Mammary epithelial cell (primary cell): ENCODE measurements at regions of chr9 and their contacts with region 1.

Region 1: GRCh38 chr9:83219152-83219923 is 156.4 kb upstream of the RASEF start:
- DNase-seq: peak; percentile 72
- H3K4me3 ChIP-seq: peak overlapping the region; percentile 45 to 86 (median 62)
- H3K27ac ChIP-seq: peak overlapping the region; percentile 60
- H3K4me1 ChIP-seq: peaks cover 23% of the 10 kb centered on the region
- H3K27me3 ChIP-seq: no peaks in the 10 kb centered on the region
- CTCF ChIP-seq: peak; percentile 32 to 71

Region 2: DNA sequence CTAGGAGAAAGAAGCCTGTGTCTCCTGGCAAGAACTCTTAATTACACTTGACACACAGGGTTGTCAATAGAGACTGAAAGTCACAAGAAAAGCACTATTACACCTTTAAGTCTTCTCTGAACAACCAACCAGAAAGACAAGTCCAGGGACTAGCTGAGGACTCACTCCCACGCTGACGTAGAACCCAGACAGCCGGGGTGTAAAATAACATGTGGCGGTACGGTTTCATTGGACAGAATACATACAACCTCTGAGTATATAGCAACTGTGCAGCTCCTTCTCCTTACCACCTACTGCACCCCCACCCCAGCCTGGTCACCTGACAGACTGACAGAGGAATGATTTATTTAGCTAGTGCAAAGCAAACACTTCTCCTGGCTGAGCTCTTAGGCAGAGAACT is 53.0 kb before region 1 on chr9:
- CTCF ChIA-PET with region 1: no interaction called
- dilution Hi-C with region 1: no loop called
- in situ Hi-C with region 1: no loop called
- intact Hi-C with region 1: loop called (anchors 1 kb)
- DNase-seq: peak; percentile 35
- H3K4me3 ChIP-seq: no peak overlapping the region
- H3K27ac ChIP-seq: no peak overlapping the region
- H3K4me1 ChIP-seq: peaks cover 14% of the 10 kb centered on the region
- H3K27me3 ChIP-seq: no peaks in the 10 kb centered on the region
- CTCF ChIP-seq: no peak

Region 3: DNA sequence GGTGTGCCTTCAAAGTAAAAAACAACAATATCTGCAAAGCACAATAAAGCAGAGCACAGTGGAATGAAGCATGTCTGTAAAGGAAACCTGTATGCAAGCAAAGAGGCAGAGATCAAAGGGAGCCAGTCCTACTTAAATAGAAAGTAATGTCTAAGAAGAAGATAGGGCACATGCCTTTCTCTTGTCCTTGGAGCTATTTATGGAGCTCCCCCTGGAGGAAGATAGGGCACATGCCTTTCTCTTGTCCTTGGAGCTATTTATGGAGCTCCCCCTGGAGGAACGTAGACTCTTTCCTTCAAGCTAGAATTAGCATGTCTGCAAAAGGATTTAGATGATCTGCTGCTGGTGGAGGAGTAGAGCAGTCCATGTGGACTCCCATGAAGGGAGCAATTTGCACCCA is 11.7 kb after region 1 on chr9:
- CTCF ChIA-PET with region 1: interaction called, 32 read pairs
- dilution Hi-C with region 1: no loop called
- in situ Hi-C with region 1: no loop called
- intact Hi-C with region 1: no loop called
- DNase-seq: no peak
- H3K4me3 ChIP-seq: no peak overlapping the region
- H3K27ac ChIP-seq: no peak overlapping the region
- H3K4me1 ChIP-seq: no peaks in the 10 kb centered on the region
- H3K27me3 ChIP-seq: no peaks in the 10 kb centered on the region
- CTCF ChIP-seq: peak; percentile 61

Region 4: DNA sequence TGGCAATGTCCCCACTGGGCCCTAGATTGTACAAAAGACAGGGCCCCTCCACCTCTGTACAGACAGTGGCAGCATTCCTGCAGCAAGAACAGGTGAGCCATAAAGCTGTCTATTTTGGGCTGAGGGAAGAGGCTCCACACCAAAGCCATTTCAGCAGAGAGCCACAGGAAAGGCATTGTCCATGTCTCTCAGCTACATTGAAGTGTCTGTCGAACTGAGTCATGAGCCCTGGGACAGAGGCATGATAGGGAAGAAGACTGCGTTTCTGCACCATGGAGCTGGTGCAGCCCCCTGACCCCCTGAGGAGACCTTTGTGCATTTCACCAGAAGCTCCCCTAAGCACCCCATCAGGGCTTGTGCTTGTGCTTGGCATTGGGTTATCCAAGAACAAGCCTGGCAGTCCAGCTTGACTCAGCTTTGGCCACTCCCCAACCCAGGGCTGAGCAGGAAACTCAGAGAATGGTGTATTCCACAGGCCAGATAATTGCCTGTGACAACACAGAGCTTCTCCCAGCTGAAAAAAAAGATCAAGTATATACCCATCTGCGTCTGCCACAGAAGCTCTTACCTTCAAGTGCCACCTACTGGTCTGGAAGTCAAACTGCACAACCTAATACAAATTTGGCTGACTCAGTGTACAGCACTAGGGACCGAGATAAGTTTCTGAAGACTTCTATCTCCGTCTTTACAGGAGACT is 324.8 kb after region 1 on chr9:
- CTCF ChIA-PET with region 1: interaction called, 10 read pairs
- dilution Hi-C with region 1: no loop called
- in situ Hi-C with region 1: loop called in 1 of 2 experiments (anchors 25 kb)
- intact Hi-C with region 1: loop called (anchors 1 kb)
- DNase-seq: peak; percentile 68
- H3K4me3 ChIP-seq: no peak overlapping the region
- H3K27ac ChIP-seq: no peak overlapping the region
- H3K4me1 ChIP-seq: no peaks in the 10 kb centered on the region
- H3K27me3 ChIP-seq: no peaks in the 10 kb centered on the region
- CTCF ChIP-seq: peak; percentile 72 to 83

Region 5: DNA sequence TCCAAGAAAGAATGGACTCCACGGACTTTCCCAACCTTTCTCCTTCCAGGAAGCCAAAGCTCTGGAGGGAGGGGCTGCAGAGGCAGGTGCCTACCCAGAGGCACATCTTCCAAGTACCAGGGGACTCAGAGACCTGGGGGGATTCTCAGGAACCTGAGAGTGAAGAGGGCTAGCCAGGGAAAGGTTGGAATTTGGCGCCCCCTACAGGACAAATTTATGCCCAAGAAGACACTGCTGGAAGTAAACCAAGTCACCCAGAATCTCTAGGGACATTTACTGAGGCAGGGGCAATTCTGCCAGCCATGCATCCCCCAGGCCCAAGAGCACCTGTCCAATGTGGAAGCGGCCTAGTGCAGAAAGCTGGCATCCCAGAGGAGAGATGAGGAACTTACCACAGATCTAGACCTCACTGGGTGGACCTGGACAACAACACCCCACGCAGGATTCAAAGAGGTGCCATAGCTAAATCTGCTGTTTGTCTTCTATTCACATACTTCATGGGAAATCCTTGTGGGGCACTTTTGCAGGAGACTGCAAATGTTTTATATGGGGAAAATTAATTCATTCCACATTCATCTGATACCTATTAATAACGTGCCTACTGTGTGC is 377.7 kb after region 1 on chr9:
- CTCF ChIA-PET with region 1: interaction called, 4 read pairs
- dilution Hi-C with region 1: no loop called
- in situ Hi-C with region 1: no loop called
- intact Hi-C with region 1: loop called (anchors 1 kb)
- DNase-seq: peak; percentile 15
- H3K4me3 ChIP-seq: no peak overlapping the region
- H3K27ac ChIP-seq: no peak overlapping the region
- H3K4me1 ChIP-seq: no peaks in the 10 kb centered on the region
- H3K27me3 ChIP-seq: no peaks in the 10 kb centered on the region
- CTCF ChIP-seq: peak; percentile 58 to 67

Region 6: DNA sequence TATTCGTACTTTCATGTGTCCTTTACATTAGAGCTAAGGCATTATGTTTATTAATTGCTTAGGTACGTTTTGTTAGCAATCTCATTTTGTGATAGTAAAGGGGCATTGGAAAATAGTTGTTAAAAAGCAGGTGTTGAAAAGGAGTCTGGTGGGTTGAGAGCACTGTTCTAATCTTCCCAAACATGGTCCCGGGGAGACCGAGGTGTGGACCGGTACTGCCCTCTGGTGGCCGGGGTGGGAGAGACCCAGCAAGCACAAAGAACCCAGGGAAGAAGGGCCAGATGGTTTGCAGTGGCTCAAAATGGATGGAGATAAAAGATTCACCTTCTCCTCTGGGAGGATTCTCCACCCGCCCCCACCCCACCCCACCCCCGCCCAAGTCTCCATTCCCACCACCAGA is 429.7 kb after region 1 on chr9:
- CTCF ChIA-PET with region 1: no interaction called
- dilution Hi-C with region 1: no loop called
- in situ Hi-C with region 1: no loop called
- intact Hi-C with region 1: loop called (anchors 5 kb)
- DNase-seq: peak; percentile 28
- H3K4me3 ChIP-seq: no peak overlapping the region
- H3K27ac ChIP-seq: no peak overlapping the region
- H3K4me1 ChIP-seq: no peaks in the 10 kb centered on the region
- H3K27me3 ChIP-seq: no peaks in the 10 kb centered on the region
- CTCF ChIP-seq: peak; percentile 81 to 85